ENCODE measurements at regions of chr1 and their contacts with region 1.

Region 1: GRCh38 chr1:221435504-221435904 is 306.4 kb downstream of the DUSP10 start:
- DNase-seq: no peak
- H3K4me3 ChIP-seq: no peak overlapping the region
- CTCF ChIP-seq: peak; percentile 87

Region 2: DNA sequence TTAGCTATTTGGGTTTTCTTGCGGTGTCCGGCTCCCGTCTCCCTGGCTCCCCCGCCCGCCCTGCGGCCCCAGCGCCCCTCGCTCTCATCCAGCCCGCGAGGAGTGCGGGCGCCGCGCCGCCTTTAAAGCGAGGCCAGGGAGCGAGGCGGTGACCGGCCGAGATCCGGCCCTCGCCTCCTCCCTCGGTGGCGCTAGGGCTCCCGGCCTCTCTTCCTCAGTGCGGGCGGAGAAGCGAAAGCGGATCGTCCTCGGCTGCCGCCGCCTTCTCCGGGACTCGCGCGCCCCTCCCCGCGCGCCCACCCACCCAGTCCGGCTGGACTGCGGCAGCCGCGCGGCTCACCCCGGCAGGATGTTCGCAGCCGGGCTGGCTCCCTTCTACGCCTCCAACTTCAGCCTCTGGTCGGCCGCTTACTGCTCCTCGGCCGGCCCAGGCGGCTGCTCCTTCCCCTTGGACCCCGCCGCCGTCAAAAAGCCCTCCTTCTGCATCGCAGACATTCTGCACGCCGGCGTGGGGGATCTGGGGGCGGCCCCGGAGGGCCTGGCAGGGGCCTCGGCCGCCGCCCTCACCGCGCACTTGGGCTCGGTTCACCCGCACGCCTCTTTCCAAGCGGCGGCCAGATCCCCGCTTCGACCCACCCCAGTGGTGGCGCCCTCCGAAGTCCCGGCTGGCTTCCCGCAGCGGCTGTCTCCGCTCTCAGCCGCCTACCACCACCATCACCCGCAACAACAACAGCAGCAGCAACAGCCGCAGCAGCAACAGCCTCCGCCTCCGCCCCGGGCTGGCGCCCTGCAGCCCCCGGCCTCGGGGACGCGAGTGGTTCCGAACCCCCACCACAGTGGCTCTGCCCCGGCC is 555.8 kb before region 1 on chr1:
- in situ Hi-C with region 1: loop called (anchors 10 kb)
- DNase-seq: no peak
- H3K4me3 ChIP-seq: peak overlapping the region; percentile 53
- CTCF ChIP-seq: no peak

Region 3: DNA sequence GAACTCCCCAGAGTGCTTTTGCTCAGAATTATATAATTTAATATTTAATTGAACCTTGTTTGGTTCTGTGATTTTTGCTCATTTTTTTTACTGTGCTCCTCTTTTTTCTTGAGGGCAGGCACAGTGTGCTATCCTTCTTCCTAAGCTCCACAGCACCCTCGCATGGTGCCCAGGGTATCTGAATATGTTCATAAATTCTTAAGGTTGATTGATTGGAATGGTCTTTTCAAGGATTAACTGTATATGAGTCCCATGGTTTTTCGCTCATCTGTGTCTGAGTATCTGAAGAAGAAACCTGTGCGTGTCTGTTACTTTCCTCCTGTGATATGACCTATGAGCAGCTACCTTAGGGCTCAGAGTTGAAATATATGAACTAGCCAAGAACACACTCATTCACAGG is 162.6 kb before region 1 on chr1:
- in situ Hi-C with region 1: loop called (anchors 10 kb)
- DNase-seq: no peak
- H3K4me3 ChIP-seq: no peak overlapping the region
- CTCF ChIP-seq: no peak

Region 4: DNA sequence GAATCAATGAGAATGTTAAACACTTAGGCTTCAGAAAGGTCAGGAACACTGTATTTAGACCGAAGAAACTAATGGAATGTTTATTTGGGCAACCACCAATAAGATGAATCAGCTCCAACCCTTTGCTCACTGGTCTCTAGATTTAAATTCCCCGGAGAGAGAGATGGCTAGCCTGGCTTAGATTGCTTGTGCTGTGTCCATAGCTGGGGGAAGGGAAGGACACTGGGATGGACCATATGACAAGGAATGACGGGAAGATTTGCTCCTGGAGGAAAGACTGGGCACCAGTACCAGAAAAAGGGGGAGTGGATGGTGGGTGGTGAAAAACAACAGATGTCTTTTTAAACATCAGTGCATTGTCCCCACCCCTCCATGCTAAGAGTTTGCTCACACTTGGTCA is 120.2 kb before region 1 on chr1:
- in situ Hi-C with region 1: no loop called
- DNase-seq: peak; percentile 58
- H3K4me3 ChIP-seq: no peak overlapping the region
- CTCF ChIP-seq: no peak